ENCODE measurements at regions of chr6 and their contacts with region 1.

Region 1: DNA sequence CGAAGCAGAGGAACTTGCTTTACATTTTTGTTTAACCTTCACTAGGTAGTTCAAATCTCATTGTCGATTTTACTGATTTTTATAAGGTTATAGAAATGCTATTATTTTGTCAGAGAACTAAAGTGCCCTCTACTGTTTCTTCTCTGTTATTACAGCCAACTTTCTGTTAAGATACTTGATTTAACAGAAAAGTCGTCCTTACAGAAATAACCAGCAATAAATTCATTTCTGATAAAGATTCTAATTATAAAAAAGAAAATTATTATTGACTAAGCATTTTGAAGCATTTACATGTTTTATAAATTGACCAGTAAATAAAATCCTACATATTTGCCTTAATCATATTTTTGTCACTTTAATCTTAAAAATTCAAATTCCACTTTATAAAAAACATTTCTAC is 60.8 kb downstream of the OGFRL1 start:
- DNase-seq: no peak
- H3K4me3 ChIP-seq: no peak overlapping the region
- H3K27ac ChIP-seq: peak overlapping the region in 2 of 4 donors; percentile 39 to 72
- H3K4me1 ChIP-seq: peaks cover 0 to 17% (median 2%) of the 10 kb centered on the region in 4 donors
- H3K27me3 ChIP-seq: no peaks in the 10 kb centered on the region
- CTCF ChIP-seq: peak; percentile 52 to 71 (median 56)
- EP300 ChIP-seq: no peak
- POLR2A ChIP-seq: no peak

Region 2: GRCh38 chr6:70622461-70622860 is 726.9 kb before region 1 on chr6:
- in situ Hi-C with region 1: no loop called
- intact Hi-C with region 1: no loop called
- DNase-seq: no peak
- H3K4me3 ChIP-seq: no peak overlapping the region
- H3K27ac ChIP-seq: no peak overlapping the region
- H3K4me1 ChIP-seq: peaks cover 0 to 7% (median 0%) of the 10 kb centered on the region in 4 donors
- H3K27me3 ChIP-seq: no peaks in the 10 kb centered on the region
- CTCF ChIP-seq: no peak
- EP300 ChIP-seq: no peak
- POLR2A ChIP-seq: no peak

Region 3: DNA sequence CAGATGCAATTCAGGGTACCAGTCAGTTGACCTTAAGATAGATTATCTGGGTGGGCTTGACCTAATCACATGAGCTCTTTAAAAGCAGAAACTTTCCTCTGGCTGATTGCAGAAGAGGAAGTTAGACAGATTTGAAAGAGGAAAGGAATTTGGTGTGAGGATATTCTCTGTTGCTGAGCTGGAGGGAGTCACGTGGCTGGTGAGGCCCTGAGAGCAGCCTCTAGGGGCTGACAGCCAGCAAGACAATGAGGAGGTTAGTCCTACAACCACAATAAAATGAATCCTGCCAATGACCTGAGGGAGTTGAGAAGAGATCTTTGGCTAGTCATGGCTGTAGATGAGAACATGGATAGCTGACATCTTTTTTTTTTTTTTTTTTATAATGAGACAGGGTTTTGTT is 305.5 kb before region 1 on chr6:
- in situ Hi-C with region 1: loop called in 1 of 4 experiments (anchors 25 kb)
- intact Hi-C with region 1: no loop called
- DNase-seq: no peak
- H3K4me3 ChIP-seq: no peak overlapping the region
- H3K27ac ChIP-seq: no peak overlapping the region
- H3K4me1 ChIP-seq: no peaks in the 10 kb centered on the region
- H3K27me3 ChIP-seq: no peaks in the 10 kb centered on the region
- CTCF ChIP-seq: no peak
- EP300 ChIP-seq: no peak
- POLR2A ChIP-seq: no peak

Region 4: GRCh38 chr6:71190809-71191208 is 158.6 kb before region 1 on chr6:
- in situ Hi-C with region 1: loop called in 2 of 4 experiments (anchors 25 kb)
- intact Hi-C with region 1: no loop called
- DNase-seq: no peak
- H3K4me3 ChIP-seq: no peak overlapping the region
- H3K27ac ChIP-seq: no peak overlapping the region
- H3K4me1 ChIP-seq: no peaks in the 10 kb centered on the region
- H3K27me3 ChIP-seq: no peaks in the 10 kb centered on the region
- CTCF ChIP-seq: peak in 2 of 5 experiments; percentile 7 to 29
- EP300 ChIP-seq: no peak
- POLR2A ChIP-seq: no peak

Region 5: DNA sequence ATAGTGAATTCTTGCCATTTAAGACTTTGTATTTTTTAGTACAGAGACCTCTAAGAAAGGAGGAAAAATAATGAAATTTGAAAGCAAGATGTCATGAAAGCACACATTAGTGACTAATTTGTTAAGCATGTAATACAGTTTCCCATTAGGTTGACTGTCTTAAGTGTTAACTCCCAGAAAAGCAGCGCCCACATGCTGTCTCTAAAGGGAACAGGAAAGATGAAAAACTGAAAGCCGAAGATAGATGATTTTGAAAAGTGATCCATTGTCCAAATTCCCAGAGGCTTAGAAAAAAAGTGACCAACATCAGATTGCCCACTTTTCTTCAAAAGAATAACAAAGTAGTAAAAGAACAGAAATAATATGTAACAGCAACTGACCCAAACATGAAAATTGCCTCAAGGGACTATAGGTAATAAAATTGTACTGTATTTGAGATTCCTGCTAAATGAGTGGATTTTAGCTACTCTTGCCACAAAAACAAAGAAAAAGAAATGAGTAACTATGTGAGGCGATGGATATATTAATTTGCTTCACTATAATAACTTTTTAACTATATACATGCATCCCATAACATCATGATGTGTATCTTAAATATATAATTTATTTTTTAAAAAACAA is 143.9 kb before region 1 on chr6:
- in situ Hi-C with region 1: loop called in 2 of 4 experiments (anchors 5 to 10 kb)
- intact Hi-C with region 1: no loop called
- DNase-seq: no peak
- H3K4me3 ChIP-seq: no peak overlapping the region
- H3K27ac ChIP-seq: no peak overlapping the region
- H3K4me1 ChIP-seq: no peaks in the 10 kb centered on the region
- H3K27me3 ChIP-seq: no peaks in the 10 kb centered on the region
- CTCF ChIP-seq: no peak
- EP300 ChIP-seq: no peak
- POLR2A ChIP-seq: no peak